GM10248 (cell line): ENCODE measurements at regions of chr1 and their contacts with region 1.

Region 1: GRCh38 chr1:206734499-206735142 is 36.0 kb upstream of the IL19 start:
- DNase-seq: peak; percentile 73
- CTCF ChIP-seq: peak; percentile 77

Region 2: GRCh38 chr1:206635080-206635977 is 99.3 kb before region 1 on chr1 and contains the start of gene DYRK3:
- CTCF ChIA-PET with region 1: interaction called, 10 read pairs
- POLR2A ChIA-PET with region 1: no interaction called
- DNase-seq: peak; percentile 97
- CTCF ChIP-seq: no peak

Region 3: GRCh38 chr1:206716870-206717673 is 17.5 kb before region 1 on chr1:
- CTCF ChIA-PET with region 1: interaction called, 96 read pairs
- POLR2A ChIA-PET with region 1: no interaction called
- DNase-seq: peak; percentile 51
- CTCF ChIP-seq: no peak

Region 4: GRCh38 chr1:206766251-206766856 is 31.7 kb after region 1 on chr1:
- CTCF ChIA-PET with region 1: interaction called, 47 read pairs
- POLR2A ChIA-PET with region 1: interaction called, 6 read pairs
- DNase-seq: peak; percentile 57
- CTCF ChIP-seq: no peak

Region 5: DNA sequence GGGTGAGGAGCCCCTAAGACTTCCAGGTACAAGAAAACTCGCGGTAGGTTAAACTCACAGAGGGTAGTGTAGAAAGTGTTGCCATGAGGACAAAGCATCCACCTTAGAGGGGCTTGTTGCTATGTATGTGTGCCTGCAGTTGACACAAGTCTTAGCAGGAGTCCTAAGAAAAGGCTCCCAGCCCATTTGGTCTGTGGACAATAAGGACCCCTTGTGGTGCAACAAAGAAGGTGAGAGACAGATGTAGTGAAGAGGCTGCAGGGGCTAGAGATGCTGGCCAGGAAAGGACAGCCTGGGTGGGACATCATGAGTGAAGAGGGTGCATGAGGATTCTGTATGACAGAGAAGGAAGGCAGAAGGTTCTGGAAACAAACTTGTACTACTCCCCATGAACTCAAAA is 74.0 kb after region 1 on chr1:
- CTCF ChIA-PET with region 1: interaction called, 464 read pairs
- POLR2A ChIA-PET with region 1: no interaction called
- DNase-seq: no peak
- CTCF ChIP-seq: peak; percentile 76

Region 6: DNA sequence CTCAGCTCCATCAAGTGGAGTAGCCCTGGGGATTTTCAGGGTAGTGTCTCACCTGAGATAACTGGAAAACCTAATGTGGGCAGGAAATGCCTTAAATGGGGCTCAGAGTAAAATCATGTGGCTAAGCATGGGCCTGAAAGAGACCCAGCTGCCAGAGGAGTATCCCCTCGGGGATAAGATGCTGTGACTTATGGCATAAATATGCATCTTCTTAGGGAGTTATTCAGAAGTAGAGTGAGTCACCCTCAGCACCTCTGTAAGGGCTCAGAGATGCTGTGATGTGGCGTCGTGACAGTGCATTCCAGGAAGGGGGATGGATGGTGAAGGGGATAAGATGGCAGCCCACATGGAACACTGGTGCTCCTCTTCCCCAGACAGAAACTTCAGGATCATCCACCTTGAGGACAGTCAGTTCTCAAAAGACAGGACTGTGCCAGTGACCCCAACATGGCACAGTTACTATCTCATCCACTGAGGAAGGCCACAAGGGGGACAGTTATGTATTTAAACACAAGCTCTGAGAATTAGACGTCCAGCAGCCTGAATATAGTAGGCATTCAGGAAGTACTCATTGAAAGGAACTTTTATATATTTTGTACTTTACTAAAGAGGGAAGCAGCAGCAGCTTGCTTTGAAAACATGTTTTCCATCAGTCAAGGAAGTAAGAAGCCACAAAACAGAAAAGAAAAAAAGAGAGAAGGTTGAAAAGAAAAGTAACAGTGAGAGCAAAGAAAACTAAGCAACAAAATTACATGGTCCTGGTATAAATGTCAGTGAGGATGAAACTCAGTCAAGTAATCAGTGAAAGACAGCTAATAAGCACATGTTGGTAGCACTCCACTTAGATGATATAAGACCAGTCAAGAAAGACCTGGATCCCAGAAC is 170.9 kb after region 1 on chr1:
- CTCF ChIA-PET with region 1: interaction called, 16 read pairs
- POLR2A ChIA-PET with region 1: no interaction called
- DNase-seq: peak; percentile 34
- CTCF ChIP-seq: no peak

Region 7: DNA sequence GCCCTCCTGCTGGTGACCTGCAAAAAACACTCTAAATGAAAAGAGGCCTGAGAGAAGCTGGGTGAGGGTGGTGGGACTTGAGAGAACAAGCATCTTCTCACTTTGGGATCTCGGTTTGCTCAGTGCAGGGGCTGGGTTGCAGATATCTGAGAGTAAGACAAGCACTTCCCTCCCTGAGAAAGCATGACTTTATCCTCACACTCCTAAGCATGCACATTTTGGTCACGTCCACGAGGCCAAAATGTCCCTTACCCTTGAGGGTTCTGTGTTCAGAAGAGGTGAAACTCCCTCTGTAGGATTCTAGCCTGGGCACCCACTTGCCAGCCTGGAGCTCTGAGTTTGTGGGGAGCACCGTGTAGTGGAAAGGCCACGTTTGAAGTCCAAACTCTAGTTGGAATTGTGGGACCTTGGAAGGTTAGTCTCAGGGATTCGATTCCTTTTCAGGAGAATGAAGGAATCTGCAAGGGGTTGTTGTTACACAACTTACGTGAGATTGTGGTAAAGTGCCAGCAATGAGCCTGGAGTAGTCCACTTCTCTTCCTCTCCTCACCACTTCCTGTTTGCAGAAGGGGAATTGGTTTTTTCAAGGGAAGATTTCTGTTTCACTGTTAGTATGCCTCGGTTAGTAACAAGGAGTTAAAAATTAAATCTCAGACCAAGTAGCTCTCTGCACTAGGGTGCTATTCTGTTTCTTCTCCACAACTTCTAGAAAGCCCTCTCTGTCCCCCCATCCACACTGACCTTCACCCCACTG is 232.7 kb after region 1 on chr1:
- CTCF ChIA-PET with region 1: interaction called, 22 read pairs
- POLR2A ChIA-PET with region 1: no interaction called
- DNase-seq: peak; percentile 41
- CTCF ChIP-seq: no peak